ENCODE measurements at regions of chrX and their contacts with region 1.

Region 1: DNA sequence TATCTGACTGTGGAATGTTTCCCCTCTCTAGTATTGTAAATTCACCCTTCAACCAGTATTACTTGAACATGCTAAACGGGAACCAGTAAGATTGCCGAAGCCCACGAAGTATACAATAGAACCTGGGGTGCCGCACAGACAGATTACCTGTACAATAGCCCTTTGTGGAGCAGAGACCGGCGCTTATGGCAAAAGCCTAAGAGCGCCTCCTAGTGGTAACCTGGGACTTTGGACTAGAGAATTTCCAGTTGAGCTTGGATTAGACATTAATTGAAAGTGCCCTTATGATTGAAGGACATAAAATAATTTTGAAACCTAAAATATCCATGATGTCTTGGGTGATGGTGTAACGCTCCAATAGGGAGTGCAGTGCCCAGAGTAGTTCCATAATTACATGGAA is 14.1 kb downstream of the ZNF157 start:
- DNase-seq: peak; percentile 21
- ATAC-seq: peak; percentile 92
- H3K4me3 ChIP-seq: no peak overlapping the region
- H3K27ac ChIP-seq: no peak overlapping the region
- H3K4me1 ChIP-seq: no peaks in the 10 kb centered on the region
- H3K27me3 ChIP-seq: no peaks in the 10 kb centered on the region
- CTCF ChIP-seq: peak; percentile 74 to 82 (median 78)
- EP300 ChIP-seq: no peak
- POLR2A ChIP-seq: no peak
- RAD21 ChIP-seq: peak; percentile 88

Region 2: DNA sequence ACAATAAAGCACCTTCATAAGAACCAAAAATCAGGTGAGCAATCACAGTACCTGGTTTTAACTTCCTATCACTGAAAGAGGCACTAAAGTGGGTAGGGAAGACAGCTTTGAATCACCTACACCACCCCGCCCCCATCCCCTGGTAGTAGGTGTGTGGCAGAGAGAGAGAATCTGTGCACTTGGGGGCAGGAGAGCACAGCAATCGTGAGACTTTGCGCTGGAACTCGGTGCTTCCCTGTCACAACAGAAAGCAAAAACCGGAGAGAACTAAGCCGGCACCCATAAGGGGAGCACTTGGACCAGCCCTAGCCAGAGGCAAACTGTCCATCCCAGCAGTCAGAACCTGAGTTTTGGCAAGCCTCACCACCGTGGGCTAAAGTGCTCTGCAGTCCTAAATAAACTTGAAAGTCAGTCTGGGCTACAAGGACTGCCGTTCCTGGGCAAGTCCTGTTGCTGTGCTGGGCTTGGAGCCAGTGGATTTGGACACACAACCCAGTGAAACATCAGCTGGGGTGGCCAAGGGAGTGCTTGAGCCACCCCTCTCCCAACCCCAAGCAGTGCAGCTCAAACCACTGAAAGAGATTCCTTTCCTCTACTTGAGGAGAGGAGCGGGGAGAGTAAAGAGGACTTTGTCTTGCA is 272.1 kb before region 1 on chrX:
- CTCF ChIA-PET with region 1: no interaction called
- POLR2A ChIA-PET with region 1: no interaction called
- RAD21 ChIA-PET with region 1: no interaction called
- SMC1A ChIA-PET with region 1: no interaction called
- in situ Hi-C with region 1: no loop called
- intact Hi-C with region 1: no loop called
- DNase-seq: no peak
- ATAC-seq: no peak
- H3K4me3 ChIP-seq: no peak overlapping the region
- H3K27ac ChIP-seq: no peak overlapping the region
- H3K4me1 ChIP-seq: no peaks in the 10 kb centered on the region
- H3K27me3 ChIP-seq: no peaks in the 10 kb centered on the region
- CTCF ChIP-seq: no peak
- EP300 ChIP-seq: no peak
- POLR2A ChIP-seq: no peak
- RAD21 ChIP-seq: no peak

Region 3: DNA sequence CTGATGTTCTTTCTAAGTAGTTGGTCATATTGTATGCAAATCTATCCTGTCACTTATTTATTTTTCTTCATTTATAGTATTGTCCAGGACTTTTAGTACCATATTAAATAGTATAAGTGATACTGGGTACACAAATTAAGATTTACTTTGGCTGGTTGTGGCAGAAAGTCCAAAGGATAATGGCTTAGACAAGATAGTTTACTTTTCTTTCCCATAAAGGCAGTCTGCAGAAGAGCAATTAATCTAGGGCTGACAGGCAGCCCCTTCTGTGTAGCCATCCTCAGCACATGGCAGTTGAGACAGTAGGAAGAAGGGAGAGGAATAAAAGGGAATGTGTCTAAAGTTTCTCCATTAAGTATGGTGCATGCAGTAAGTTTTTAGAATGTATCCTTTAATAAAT is 233.1 kb before region 1 on chrX:
- CTCF ChIA-PET with region 1: no interaction called
- POLR2A ChIA-PET with region 1: no interaction called
- RAD21 ChIA-PET with region 1: no interaction called
- SMC1A ChIA-PET with region 1: no interaction called
- in situ Hi-C with region 1: no loop called
- intact Hi-C with region 1: no loop called
- DNase-seq: no peak
- ATAC-seq: no peak
- H3K4me3 ChIP-seq: no peak overlapping the region
- H3K27ac ChIP-seq: no peak overlapping the region
- H3K4me1 ChIP-seq: peaks cover 6% of the 10 kb centered on the region; the same call in 1 of the 2 replicates
- H3K27me3 ChIP-seq: no peaks in the 10 kb centered on the region
- CTCF ChIP-seq: no peak
- EP300 ChIP-seq: no peak
- POLR2A ChIP-seq: no peak
- RAD21 ChIP-seq: no peak

Region 4: GRCh38 chrX:47361538-47362511 is 22.7 kb before region 1 on chrX:
- CTCF ChIA-PET with region 1: interaction called, 16 read pairs
- POLR2A ChIA-PET with region 1: no interaction called
- RAD21 ChIA-PET with region 1: interaction called, 4 read pairs
- SMC1A ChIA-PET with region 1: interaction called, 4 read pairs
- in situ Hi-C with region 1: no loop called
- intact Hi-C with region 1: no loop called
- DNase-seq: peak; percentile 96
- ATAC-seq: peak; percentile 89
- H3K4me3 ChIP-seq: peak overlapping the region; percentile 69
- H3K27ac ChIP-seq: peak overlapping the region; percentile 45
- H3K4me1 ChIP-seq: no peaks in the 10 kb centered on the region
- H3K27me3 ChIP-seq: no peaks in the 10 kb centered on the region
- CTCF ChIP-seq: peak; percentile 9 to 43 (median 29); a peak in 3 of 6 replicates
- EP300 ChIP-seq: no peak
- POLR2A ChIP-seq: no peak
- RAD21 ChIP-seq: peak; percentile 42; the same call in 1 of the 2 replicates

Region 5: GRCh38 chrX:47523297-47523696 is 138.8 kb after region 1 on chrX:
- CTCF ChIA-PET with region 1: interaction called, 11 read pairs
- POLR2A ChIA-PET with region 1: no interaction called
- RAD21 ChIA-PET with region 1: interaction called, 6 read pairs
- SMC1A ChIA-PET with region 1: interaction called, 5 read pairs
- in situ Hi-C with region 1: no loop called
- intact Hi-C with region 1: loop called (anchors 5 kb)
- DNase-seq: no peak
- ATAC-seq: peak; percentile 99
- H3K4me3 ChIP-seq: peak overlapping the region; percentile 50
- H3K27ac ChIP-seq: peak overlapping the region; percentile 10; the same call in 1 of the 2 replicates
- H3K4me1 ChIP-seq: no peaks in the 10 kb centered on the region
- H3K27me3 ChIP-seq: no peaks in the 10 kb centered on the region
- CTCF ChIP-seq: peak; percentile 54 to 85 (median 81); a peak in 5 of 6 replicates
- EP300 ChIP-seq: no peak
- POLR2A ChIP-seq: no peak
- RAD21 ChIP-seq: peak; percentile 72

Measured in GM12878 (cell line).